WTC11 (cell line): ENCODE measurements at regions of chr5 and their contacts with region 1.

Region 1: GRCh38 chr5:128201065-128201926 is 117.7 kb downstream of the SLC12A2 start:
- DNase-seq: peak; percentile 91
- ATAC-seq: peak; percentile 95
- H3K4me3 Mint-ChIP-seq: peak overlapping the region; percentile 61
- H3K27ac Mint-ChIP-seq: no peak overlapping the region
- H3K4me1 Mint-ChIP-seq: peaks cover 10% of the 10 kb centered on the region
- H3K27me3 Mint-ChIP-seq: peaks cover 20% of the 10 kb centered on the region
- CTCF ChIP-seq: peak; percentile 89

Region 2: DNA sequence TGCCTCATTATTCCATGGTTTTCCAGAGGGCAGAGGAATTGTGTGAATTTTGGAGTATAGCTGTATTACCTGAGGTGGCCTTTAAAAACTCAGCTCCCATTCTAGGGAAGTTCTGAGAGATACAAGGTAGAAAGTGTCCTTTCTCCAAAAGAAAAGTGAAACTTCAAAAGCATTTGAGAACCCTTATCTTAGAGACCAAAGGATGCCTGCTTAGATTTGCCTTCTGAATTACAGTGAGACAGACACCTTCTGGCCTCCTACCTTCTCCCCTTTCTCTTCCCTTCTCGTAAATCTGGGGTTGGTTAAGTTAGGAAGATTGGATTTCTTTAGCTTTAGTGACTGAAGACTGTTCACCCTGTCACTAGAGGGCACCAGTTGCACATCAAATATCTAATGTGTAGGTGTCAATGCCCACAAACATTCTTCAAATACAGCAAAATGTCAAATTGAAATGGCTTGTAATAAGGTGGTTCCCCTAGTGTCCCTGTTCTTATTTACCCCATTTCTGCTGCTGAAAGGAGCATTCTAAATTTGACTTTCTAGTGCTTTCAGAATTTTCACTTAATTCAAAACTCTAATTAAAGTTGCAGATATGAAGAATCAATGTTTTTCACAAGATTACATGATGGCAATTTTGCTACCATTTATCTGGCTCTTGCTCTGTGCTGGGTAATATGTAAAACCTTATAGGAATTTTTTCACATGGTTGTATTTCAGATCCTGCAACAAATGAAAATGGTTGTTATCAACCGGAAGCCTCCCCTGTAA is 637.1 kb before region 1 on chr5:
- CTCF ChIA-PET with region 1: interaction called, 13 read pairs
- POLR2A ChIA-PET with region 1: no interaction called
- DNase-seq: peak; percentile 35
- ATAC-seq: peak; percentile 79
- H3K4me3 Mint-ChIP-seq: no peak overlapping the region
- H3K27ac Mint-ChIP-seq: no peak overlapping the region
- H3K4me1 Mint-ChIP-seq: peaks cover 9% of the 10 kb centered on the region
- H3K27me3 Mint-ChIP-seq: peaks cover 3% of the 10 kb centered on the region
- CTCF ChIP-seq: peak; percentile 54; the same call in 1 of the 2 replicates

Region 3: GRCh38 chr5:127875235-127876021 is 325.9 kb before region 1 on chr5:
- CTCF ChIA-PET with region 1: interaction called, 18 read pairs
- POLR2A ChIA-PET with region 1: no interaction called
- DNase-seq: peak; percentile 37
- ATAC-seq: peak; percentile 92
- H3K4me3 Mint-ChIP-seq: no peak overlapping the region
- H3K27ac Mint-ChIP-seq: no peak overlapping the region
- H3K4me1 Mint-ChIP-seq: peaks cover 5% of the 10 kb centered on the region; the same call in 1 of the 2 replicates
- H3K27me3 Mint-ChIP-seq: no peaks in the 10 kb centered on the region
- CTCF ChIP-seq: no peak

Region 4: GRCh38 chr5:128216860-128217531 is 15.7 kb after region 1 on chr5:
- CTCF ChIA-PET with region 1: no interaction called
- POLR2A ChIA-PET with region 1: no interaction called
- DNase-seq: no peak
- ATAC-seq: no peak
- H3K4me3 Mint-ChIP-seq: no peak overlapping the region
- H3K27ac Mint-ChIP-seq: no peak overlapping the region
- H3K4me1 Mint-ChIP-seq: peaks cover 3% of the 10 kb centered on the region; the same call in 1 of the 2 replicates
- H3K27me3 Mint-ChIP-seq: no peaks in the 10 kb centered on the region
- CTCF ChIP-seq: no peak